ENCODE measurements at regions of chr4 and their contacts with region 1.

Region 1: GRCh38 chr4:181432335-181432734 is 810.9 kb upstream of the TENM3 start:
- DNase-seq: no peak
- H3K4me3 ChIP-seq: no peak overlapping the region
- H3K27ac ChIP-seq: no peak overlapping the region
- H3K4me1 ChIP-seq: no peaks in the 10 kb centered on the region
- H3K27me3 ChIP-seq: no peaks in the 10 kb centered on the region
- CTCF ChIP-seq: no peak

Region 2: GRCh38 chr4:180993244-180993836 is 439.0 kb before region 1 on chr4:
- CTCF ChIA-PET with region 1: no interaction called
- dilution Hi-C with region 1: no loop called
- in situ Hi-C with region 1: no loop called
- intact Hi-C with region 1: no loop called
- DNase-seq: no peak
- H3K4me3 ChIP-seq: no peak overlapping the region
- H3K27ac ChIP-seq: no peak overlapping the region
- H3K4me1 ChIP-seq: peaks cover 14% of the 10 kb centered on the region
- H3K27me3 ChIP-seq: no peaks in the 10 kb centered on the region
- CTCF ChIP-seq: no peak

Region 3: DNA sequence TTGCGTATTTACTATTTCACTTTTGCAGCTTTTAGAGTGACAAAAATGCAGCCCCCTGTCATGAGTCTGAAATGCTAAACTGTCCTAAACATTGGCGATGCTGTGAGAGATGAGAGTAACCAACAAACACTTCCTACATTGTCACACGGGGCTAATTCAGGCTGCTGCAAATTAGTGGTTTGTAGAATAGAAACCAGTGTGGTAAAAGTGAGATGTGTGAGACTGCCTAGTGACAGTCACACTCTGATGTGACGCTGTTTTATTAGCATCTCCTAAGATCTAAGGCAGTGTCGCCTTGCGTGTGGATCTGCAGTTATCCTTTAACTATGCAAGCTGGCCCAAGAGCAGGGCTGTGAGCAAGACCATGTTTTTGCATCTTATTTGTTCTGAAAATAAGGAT is 10.7 kb after region 1 on chr4:
- CTCF ChIA-PET with region 1: no interaction called
- dilution Hi-C with region 1: no loop called
- in situ Hi-C with region 1: no loop called
- intact Hi-C with region 1: no loop called
- DNase-seq: no peak
- H3K4me3 ChIP-seq: no peak overlapping the region
- H3K27ac ChIP-seq: no peak overlapping the region
- H3K4me1 ChIP-seq: no peaks in the 10 kb centered on the region
- H3K27me3 ChIP-seq: peaks cover 5% of the 10 kb centered on the region
- CTCF ChIP-seq: no peak

Region 4: GRCh38 chr4:181475781-181476507 is 43.6 kb after region 1 on chr4:
- CTCF ChIA-PET with region 1: no interaction called
- dilution Hi-C with region 1: loop called (anchors 5 kb)
- in situ Hi-C with region 1: no loop called
- intact Hi-C with region 1: no loop called
- DNase-seq: no peak
- H3K4me3 ChIP-seq: no peak overlapping the region
- H3K27ac ChIP-seq: no peak overlapping the region
- H3K4me1 ChIP-seq: no peaks in the 10 kb centered on the region
- H3K27me3 ChIP-seq: no peaks in the 10 kb centered on the region
- CTCF ChIP-seq: no peak

Region 5: DNA sequence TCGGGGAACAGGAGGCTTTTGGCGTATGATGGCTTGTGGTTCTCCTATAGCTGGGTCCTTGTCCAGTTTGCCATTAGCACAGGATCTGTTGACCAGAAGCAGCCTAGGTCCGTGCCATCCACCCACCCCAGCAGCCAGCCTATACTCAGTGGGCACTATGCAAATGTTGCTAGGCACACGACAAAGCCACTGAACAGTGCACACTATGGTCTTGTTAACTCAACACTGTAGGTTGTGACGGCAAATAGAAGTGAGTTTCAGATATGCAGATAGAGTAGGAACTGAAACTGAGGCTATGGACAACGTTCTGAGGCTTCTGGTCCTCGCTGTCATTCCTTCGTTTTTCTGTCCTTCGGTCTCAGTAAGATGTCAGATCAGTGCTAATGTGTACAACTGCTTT is 269.6 kb after region 1 on chr4:
- CTCF ChIA-PET with region 1: no interaction called
- dilution Hi-C with region 1: no loop called
- in situ Hi-C with region 1: no loop called
- intact Hi-C with region 1: no loop called
- DNase-seq: no peak
- H3K4me3 ChIP-seq: no peak overlapping the region
- H3K27ac ChIP-seq: no peak overlapping the region
- H3K4me1 ChIP-seq: no peaks in the 10 kb centered on the region
- H3K27me3 ChIP-seq: peaks cover 2% of the 10 kb centered on the region
- CTCF ChIP-seq: no peak